ENCODE measurements at regions of chr4 and their contacts with region 1.

Region 1: GRCh38 chr4:165112368-165113139 is at the start of gene TMEM192:
- DNase-seq: peak; percentile 84 to 97 (median 91)
- ATAC-seq: peak; percentile 99
- H3K4me3 ChIP-seq: peak within 1 kb of the TSS; percentile 88
- H3K4me3 Mint-ChIP-seq: peak within 1 kb of the TSS; percentile 90 to 99 (median 94)
- H3K27ac ChIP-seq: peak within 1 kb of the TSS; percentile 75
- H3K27ac Mint-ChIP-seq: peak within 1 kb of the TSS; percentile 75 to 96 (median 94)
- H3K4me1 ChIP-seq: peaks cover 0 to 7% of the 10 kb centered on the region in 2 donors
- H3K4me1 Mint-ChIP-seq: peaks cover 13 to 37% (median 18%) of the 10 kb centered on the region in 7 donors
- H3K27me3 ChIP-seq: no peaks in the 10 kb centered on the region
- H3K27me3 Mint-ChIP-seq: peaks cover 0 to 23% (median 0%) of the 10 kb centered on the region in 5 donors
- total RNA-seq, gene TMEM192: 5.3 to 13.9 (median 9.6) TPM

Region 2: DNA sequence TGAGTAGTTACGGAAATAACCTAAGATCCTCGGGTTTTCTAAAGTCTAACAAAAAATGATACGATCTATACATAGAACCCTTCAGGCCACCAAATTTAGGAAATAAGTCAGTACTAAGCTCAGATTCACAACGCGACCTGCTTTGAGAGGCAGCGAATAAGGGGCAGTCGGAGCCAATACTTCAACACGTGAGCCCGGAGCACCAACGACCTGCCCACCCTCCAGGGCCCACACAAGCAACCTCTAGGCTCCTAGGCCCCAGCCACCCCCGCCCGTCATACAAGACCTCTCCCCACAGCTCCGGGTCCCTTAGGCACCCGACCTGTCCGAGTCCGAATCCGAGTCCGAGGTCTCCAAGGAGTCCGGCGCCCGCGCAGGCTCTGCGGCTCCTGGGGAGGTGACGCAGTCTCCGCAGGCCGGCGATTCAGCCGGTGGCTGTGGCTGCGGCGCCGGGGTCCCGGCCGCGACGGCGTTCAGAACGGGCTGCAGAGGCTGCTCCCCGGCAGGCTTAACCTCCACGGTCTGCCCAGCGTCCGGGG is 1946.4 kb before region 1 on chr4:
- CTCF ChIA-PET with region 1: no interaction called
- POLR2A ChIA-PET with region 1: no interaction called
- intact Hi-C with region 1: loop called (anchors 2 kb)
- DNase-seq: peak; percentile 42 to 70 (median 63)
- ATAC-seq: peak; percentile 60
- H3K4me3 ChIP-seq: peak overlapping the region; percentile 69
- H3K4me3 Mint-ChIP-seq: peak overlapping the region; percentile 88 to 98 (median 92)
- H3K27ac ChIP-seq: peak overlapping the region; percentile 98
- H3K27ac Mint-ChIP-seq: peak overlapping the region; percentile 97 to 100 (median 99)
- H3K4me1 ChIP-seq: peaks cover 5 to 19% of the 10 kb centered on the region in 2 donors
- H3K4me1 Mint-ChIP-seq: peaks cover 28 to 67% (median 54%) of the 10 kb centered on the region in 7 donors
- H3K27me3 ChIP-seq: no peaks in the 10 kb centered on the region
- H3K27me3 Mint-ChIP-seq: no peaks in the 10 kb centered on the region

Region 3: DNA sequence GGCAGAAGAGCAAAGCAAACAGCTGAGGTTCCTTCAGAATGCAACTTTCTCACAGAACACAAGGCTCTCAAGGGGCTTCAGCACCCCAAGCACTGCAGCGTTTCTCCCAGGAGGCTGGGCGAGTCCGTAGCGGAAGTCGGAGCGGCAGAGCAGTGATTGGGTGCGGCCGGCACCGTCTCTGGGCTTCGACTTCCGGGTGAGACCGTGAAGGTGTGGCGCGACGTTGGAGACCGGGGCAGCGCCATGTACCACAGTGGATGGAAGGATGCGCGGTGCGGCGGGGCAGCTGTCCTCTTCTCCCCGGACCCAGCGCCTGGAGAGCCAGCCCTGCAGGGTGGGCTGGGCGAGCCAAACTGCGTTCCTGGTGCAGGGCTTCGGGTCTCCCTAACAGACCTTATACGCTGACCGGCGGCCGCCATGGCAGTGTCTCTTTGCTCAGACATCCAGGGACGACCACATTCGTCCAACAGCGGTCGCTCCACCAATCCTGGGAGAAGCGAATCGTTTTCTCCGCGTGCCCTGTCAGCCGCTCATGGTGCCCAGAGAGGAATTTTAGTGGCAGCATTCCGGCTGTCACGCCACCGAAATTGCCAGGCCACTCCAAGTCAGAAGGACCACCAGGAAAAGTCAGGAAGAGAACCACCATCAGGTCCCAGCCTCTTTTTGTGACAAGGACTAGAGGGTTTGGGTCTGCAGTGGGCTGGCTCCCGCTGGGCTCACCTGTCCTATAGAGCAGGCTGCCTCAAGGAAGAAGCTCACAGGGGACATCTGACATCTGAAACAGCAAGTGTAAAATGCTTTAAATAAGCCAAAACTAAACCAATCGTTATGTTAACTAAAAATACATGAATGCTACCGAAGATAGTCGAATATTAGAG is 155.5 kb before region 1 on chr4:
- CTCF ChIA-PET with region 1: no interaction called
- POLR2A ChIA-PET with region 1: no interaction called
- intact Hi-C with region 1: loop called (anchors 1 kb)
- DNase-seq: peak; percentile 41 to 78 (median 59)
- ATAC-seq: peak; percentile 96
- H3K4me3 ChIP-seq: peak overlapping the region; percentile 69
- H3K4me3 Mint-ChIP-seq: peak overlapping the region; percentile 79 to 94 (median 91)
- H3K27ac ChIP-seq: no peak overlapping the region
- H3K27ac Mint-ChIP-seq: peak overlapping the region; percentile 70 to 88 (median 81)
- H3K4me1 ChIP-seq: no peaks in the 10 kb centered on the region
- H3K4me1 Mint-ChIP-seq: peaks cover 11 to 28% (median 21%) of the 10 kb centered on the region in 7 donors
- H3K27me3 ChIP-seq: no peaks in the 10 kb centered on the region
- H3K27me3 Mint-ChIP-seq: peaks cover 7 to 21% (median 12%) of the 10 kb centered on the region in 5 donors

Region 4: GRCh38 chr4:165207431-165208220 is 95.1 kb after region 1 on chr4 and contains the start of gene KLHL2:
- CTCF ChIA-PET with region 1: interaction called, 4 read pairs
- POLR2A ChIA-PET with region 1: interaction called, 4 read pairs
- intact Hi-C with region 1: loop called (anchors 1 to 2 kb)
- DNase-seq: peak; percentile 52 to 78 (median 66)
- ATAC-seq: peak; percentile 88
- H3K4me3 ChIP-seq: peak within 1 kb of the TSS; percentile 89
- H3K4me3 Mint-ChIP-seq: peak within 1 kb of the TSS; percentile 86 to 98 (median 96)
- H3K27ac ChIP-seq: peak within 1 kb of the TSS; percentile 65
- H3K27ac Mint-ChIP-seq: peak within 1 kb of the TSS; percentile 90 to 95 (median 92)
- H3K4me1 ChIP-seq: peaks cover 0 to 33% of the 10 kb centered on the region in 2 donors
- H3K4me1 Mint-ChIP-seq: peaks cover 46 to 75% (median 73%) of the 10 kb centered on the region in 7 donors
- H3K27me3 ChIP-seq: no peaks in the 10 kb centered on the region
- H3K27me3 Mint-ChIP-seq: no peaks in the 10 kb centered on the region
- total RNA-seq, gene KLHL2: 26.9 to 39.9 (median 27.9) TPM

Region 5: DNA sequence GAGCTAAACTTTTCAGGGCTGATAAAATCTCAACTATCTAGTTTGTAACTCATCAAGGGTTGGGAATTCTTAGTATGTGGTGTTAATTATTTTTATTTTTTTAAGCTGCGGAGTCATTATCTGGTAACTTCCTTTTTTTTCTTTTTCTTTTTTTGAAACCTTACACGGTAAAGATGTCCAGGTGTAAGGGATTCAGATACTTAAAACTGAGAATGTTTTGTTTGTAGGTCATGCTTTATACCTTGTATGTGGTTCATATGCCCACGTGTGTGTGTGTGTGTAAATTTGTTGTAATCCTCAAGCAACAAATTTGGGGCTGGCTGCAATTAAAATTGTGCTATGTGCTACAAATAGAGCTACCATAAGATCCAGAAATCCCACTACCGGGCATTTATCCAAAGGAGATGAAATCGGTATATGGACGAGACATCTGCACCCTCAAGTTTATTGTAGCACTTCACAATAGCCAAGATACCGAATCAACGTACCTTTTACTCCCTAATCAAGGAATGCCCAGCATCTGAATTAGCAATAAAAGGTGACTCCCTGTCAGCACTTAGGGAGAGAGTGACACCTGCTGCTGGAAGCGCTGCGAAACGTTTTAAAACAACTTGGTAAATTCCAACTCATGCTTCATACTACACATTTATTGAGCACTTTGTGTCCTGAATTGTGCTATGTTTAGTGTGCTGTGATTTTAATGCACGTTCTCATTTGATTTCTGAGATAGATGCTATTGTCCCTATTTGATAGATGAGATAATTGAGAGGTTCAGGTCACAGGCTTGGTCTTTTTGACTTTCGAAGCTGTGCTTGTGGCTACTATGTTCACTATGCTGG is 231.0 kb after region 1 on chr4:
- CTCF ChIA-PET with region 1: interaction called, 4 read pairs
- POLR2A ChIA-PET with region 1: no interaction called
- intact Hi-C with region 1: loop called in 1 of 2 experiments (anchors 1 kb)
- DNase-seq: peak in 5 of 9 donors; percentile 2 to 34 (median 21)
- ATAC-seq: peak; percentile 22
- H3K4me3 ChIP-seq: no peak overlapping the region
- H3K4me3 Mint-ChIP-seq: no peak overlapping the region
- H3K27ac ChIP-seq: no peak overlapping the region
- H3K27ac Mint-ChIP-seq: peak overlapping the region in 5 of 9 donors; percentile 41 to 86 (median 66)
- H3K4me1 ChIP-seq: no peaks in the 10 kb centered on the region
- H3K4me1 Mint-ChIP-seq: peaks cover 0 to 3% (median 0%) of the 10 kb centered on the region in 7 donors
- H3K27me3 ChIP-seq: no peaks in the 10 kb centered on the region
- H3K27me3 Mint-ChIP-seq: no peaks in the 10 kb centered on the region